Posterior vena cava (tissue), 2 donors: ENCODE measurements at regions of chr1 and their contacts with region 1.

Region 1: DNA sequence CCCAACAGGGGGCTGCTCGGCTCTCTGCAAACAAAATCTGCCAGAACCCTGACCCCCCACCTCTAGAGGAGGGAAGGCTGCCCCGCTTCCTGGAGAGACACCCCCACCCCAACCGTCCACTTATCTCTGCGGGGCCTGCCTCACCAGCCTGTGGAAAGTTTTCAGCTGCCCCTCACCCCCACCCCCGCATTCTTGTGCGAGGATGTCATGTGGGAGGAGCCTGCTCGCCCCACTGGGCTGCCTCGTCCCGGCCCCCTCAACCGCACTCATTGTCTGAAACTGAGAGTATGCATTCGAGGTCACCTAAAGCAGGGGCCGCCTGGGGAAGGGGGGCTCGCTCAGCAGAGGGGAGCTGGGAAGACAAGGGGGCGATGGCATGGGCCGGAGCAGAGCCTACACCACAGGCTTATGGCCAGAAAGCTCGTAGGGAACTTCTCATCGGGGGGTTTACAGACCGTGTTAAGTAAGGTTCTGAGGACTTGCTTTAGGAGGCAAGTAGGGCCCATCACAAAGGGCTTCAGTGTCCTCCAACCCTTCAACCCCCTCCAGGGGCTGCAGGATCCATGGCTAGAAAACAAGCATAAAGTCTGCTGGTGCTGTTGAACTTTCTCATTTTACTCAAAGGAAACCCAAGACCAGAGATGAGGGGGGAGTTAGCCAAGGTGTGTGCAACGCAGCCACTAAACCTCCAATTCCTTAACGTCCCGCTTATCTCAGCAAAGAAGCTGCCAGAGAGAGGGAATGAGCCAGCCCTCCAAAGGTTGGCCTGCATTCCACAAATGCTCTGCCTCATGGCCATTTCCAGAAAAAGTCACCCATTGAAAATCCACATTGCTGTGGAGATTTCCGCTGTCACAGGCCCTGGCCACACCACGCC is 9.4 kb downstream of the EPHA2 start:
- DNase-seq: peak; percentile 91

Region 2: GRCh38 chr1:16181887-16182719 is 35.6 kb after region 1 on chr1:
- intact Hi-C with region 1: loop called in 1 of 2 experiments (anchors 5 kb)
- DNase-seq: peak; percentile 95

Region 3: GRCh38 chr1:17849216-17849615 is 1702.7 kb after region 1 on chr1:
- intact Hi-C with region 1: no loop called
- DNase-seq: no peak